H1 (cell line): ENCODE measurements at regions of chr6 and their contacts with region 1.

Region 1: DNA sequence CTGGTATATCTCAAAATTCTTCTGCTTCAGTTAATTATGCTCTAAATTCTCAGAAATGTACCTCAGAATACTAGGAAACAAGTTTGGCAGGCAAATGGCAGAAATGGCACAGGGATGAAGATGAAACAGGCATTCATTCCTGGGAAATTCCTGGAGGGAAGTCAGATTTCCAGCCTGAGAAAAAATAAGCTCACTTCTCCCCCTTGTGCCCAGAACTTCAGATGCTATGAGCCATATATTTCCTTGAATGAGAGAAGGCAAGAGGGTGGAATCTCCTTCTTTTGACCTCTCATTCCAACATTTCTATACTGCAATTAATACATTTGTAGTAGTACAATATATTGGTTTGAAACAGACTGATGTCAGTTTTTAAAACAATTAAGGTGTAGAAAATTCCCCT is 22.8 kb downstream of the RGS17 start:
- DNase-seq: no peak
- H3K4me3 ChIP-seq: no peak overlapping the region
- H3K27ac ChIP-seq: no peak overlapping the region
- H3K4me1 ChIP-seq: peaks cover 0 to 6% (median 2%) of the 10 kb centered on the region in 4 experiments; a peak in 4 of 7 replicates
- H3K27me3 ChIP-seq: no peaks in the 10 kb centered on the region
- CTCF ChIP-seq: peak in 1 of 3 experiments; percentile 31; a peak in 2 of 4 replicates
- EP300 ChIP-seq: no peak
- POLR2A ChIP-seq: no peak
- RAD21 ChIP-seq: peak; percentile 51 to 53

Region 2: DNA sequence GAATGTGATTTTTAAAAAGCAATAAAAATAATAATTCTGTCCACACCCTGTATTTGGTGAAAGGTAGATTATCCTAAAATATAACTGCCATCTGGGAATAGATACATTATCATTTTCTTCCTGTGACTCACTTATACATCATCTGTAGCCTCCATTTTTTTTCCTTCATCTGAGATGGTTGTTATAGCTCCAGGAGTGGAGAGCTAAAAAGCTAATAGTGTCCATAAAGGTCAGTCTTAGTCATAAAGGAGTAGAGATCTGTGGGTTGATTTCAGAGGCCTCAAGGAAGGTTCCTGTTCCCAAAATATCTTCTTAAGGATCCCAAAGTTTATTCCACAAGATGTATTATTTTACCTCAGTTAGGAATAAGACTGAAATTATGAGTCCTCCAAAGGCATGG is 166.6 kb before region 1 on chr6:
- CTCF ChIA-PET with region 1: no interaction called
- POLR2A ChIA-PET with region 1: no interaction called
- DNase-seq: no peak
- H3K4me3 ChIP-seq: no peak overlapping the region
- H3K27ac ChIP-seq: no peak overlapping the region
- H3K4me1 ChIP-seq: no peaks in the 10 kb centered on the region; a peak in 1 of 7 replicates
- H3K27me3 ChIP-seq: no peaks in the 10 kb centered on the region
- CTCF ChIP-seq: no peak
- EP300 ChIP-seq: no peak
- POLR2A ChIP-seq: no peak
- RAD21 ChIP-seq: no peak

Region 3: DNA sequence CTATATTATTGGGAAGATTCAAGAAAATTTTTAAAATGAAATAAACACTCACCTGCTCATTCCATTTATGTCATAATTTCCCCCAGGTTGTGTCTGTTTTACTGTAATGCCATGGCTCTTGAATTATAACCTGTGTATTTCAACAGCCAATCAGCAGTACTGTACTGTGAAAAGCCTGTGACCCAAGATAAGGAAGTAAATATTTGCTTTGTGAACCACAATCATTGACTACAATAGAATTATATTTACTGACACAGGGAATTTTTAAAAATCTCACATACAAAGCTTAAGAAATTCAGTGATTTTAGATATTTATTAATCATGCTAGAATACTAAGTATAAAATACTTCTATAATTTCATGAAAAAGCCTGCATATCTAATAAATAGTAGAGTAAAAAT is 16.7 kb after region 1 on chr6:
- CTCF ChIA-PET with region 1: interaction called, 14 read pairs
- POLR2A ChIA-PET with region 1: no interaction called
- DNase-seq: no peak
- H3K4me3 ChIP-seq: no peak overlapping the region
- H3K27ac ChIP-seq: no peak overlapping the region
- H3K4me1 ChIP-seq: peaks cover 0 to 5% (median under 1%) of the 10 kb centered on the region in 4 experiments; a peak in 1 of 7 replicates
- H3K27me3 ChIP-seq: peaks cover 0 to 12% (median 5%) of the 10 kb centered on the region in 4 experiments; a peak in 5 of 7 replicates
- CTCF ChIP-seq: no peak
- EP300 ChIP-seq: no peak
- POLR2A ChIP-seq: no peak
- RAD21 ChIP-seq: no peak